ENCODE measurements at regions of chr9 and their contacts with region 1.

Region 1: GRCh38 chr9:15211160-15211814 is 95.7 kb downstream of the TTC39B start:
- DNase-seq: peak; percentile 14 to 34
- ATAC-seq: peak; percentile 62 to 78
- H3K4me3 ChIP-seq: no peak overlapping the region
- H3K27ac ChIP-seq: no peak overlapping the region
- H3K4me1 ChIP-seq: no peaks in the 10 kb centered on the region
- H3K27me3 ChIP-seq: no peaks in the 10 kb centered on the region
- CTCF ChIP-seq: peak; percentile 62 to 90 (median 69)
- POLR2A ChIP-seq: no peak

Region 2: DNA sequence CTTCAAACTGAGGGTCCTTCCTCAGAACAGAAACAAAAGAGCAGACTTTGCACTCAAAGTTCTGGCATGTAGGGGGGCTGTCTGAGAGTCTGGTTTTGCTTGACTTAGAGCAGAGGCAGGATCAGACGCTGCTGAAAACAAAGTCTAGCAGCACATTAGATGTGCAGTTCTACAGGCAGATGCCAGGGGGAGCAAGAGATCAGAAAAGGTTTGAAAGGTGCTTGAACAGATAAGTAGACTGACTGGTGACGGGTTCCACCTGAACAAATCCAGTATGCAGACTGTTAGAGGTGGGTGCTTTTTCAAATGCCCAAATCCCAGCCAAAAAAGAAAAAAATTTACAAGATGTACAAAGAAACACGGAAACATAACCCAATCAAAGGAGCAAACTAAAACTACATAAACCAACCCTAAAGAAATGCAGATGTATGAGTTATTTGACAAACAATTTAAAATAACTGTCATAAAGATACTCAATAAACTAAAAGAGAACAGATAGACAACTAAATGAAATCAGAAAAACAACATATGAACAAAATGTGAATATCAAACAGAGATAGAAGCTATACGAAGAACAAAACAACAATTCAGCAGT is 106.4 kb before region 1 on chr9:
- in situ Hi-C with region 1: loop called in 1 of 4 experiments (anchors 25 kb)
- intact Hi-C with region 1: no loop called
- DNase-seq: peak in 1 of 2 donors; percentile 8
- ATAC-seq: peak; percentile 73 to 84
- H3K4me3 ChIP-seq: no peak overlapping the region
- H3K27ac ChIP-seq: no peak overlapping the region
- H3K4me1 ChIP-seq: no peaks in the 10 kb centered on the region
- H3K27me3 ChIP-seq: no peaks in the 10 kb centered on the region
- CTCF ChIP-seq: peak; percentile 57 to 77 (median 75)
- POLR2A ChIP-seq: no peak

Region 3: GRCh38 chr9:15370466-15371447 is 159.5 kb after region 1 on chr9:
- in situ Hi-C with region 1: no loop called
- intact Hi-C with region 1: no loop called
- DNase-seq: no peak
- ATAC-seq: no peak
- H3K4me3 ChIP-seq: no peak overlapping the region
- H3K27ac ChIP-seq: no peak overlapping the region
- H3K4me1 ChIP-seq: no peaks in the 10 kb centered on the region
- H3K27me3 ChIP-seq: no peaks in the 10 kb centered on the region
- CTCF ChIP-seq: no peak
- POLR2A ChIP-seq: no peak

Region 4: DNA sequence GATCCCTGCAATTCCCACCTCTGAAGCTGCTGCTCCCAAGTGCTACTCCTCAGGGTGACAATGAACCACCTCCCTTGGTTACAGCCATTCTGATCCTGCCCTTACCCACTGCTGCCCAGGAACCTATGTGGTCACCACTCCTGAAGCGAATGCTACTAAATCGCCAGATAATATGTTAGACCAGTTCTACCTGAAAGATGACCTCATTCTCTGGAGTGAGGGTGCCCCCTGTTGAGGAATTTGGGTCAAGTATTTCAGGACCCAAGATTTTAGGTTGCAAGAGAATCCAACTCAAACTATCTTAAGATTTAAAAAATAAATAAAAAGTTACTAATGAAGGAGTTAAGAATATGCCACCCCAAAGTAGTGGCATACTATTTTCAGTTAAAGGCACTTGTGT is 205.6 kb after region 1 on chr9:
- in situ Hi-C with region 1: loop called in 3 of 4 experiments (anchors 10 to 25 kb)
- intact Hi-C with region 1: loop called (anchors 10 kb)
- DNase-seq: no peak
- ATAC-seq: no peak
- H3K4me3 ChIP-seq: no peak overlapping the region
- H3K27ac ChIP-seq: no peak overlapping the region
- H3K4me1 ChIP-seq: no peaks in the 10 kb centered on the region
- H3K27me3 ChIP-seq: no peaks in the 10 kb centered on the region
- CTCF ChIP-seq: no peak
- POLR2A ChIP-seq: no peak

Region 5: GRCh38 chr9:15422372-15423230 is 211.3 kb after region 1 on chr9 and contains the start of gene SNAPC3:
- in situ Hi-C with region 1: loop called in 3 of 4 experiments (anchors 10 to 25 kb)
- intact Hi-C with region 1: loop called (anchors 10 kb)
- DNase-seq: peak; percentile 83 to 88
- ATAC-seq: peak; percentile 97 to 98
- H3K4me3 ChIP-seq: peak within 1 kb of the TSS; percentile 86 to 100 (median 89)
- H3K27ac ChIP-seq: peak within 1 kb of the TSS; percentile 86 to 91 (median 90)
- H3K4me1 ChIP-seq: peaks cover 6 to 16% of the 10 kb centered on the region in 2 donors
- H3K27me3 ChIP-seq: no peaks in the 10 kb centered on the region
- CTCF ChIP-seq: peak in 2 of 5 experiments; percentile 16 to 18
- POLR2A ChIP-seq: peak; percentile 50 to 51
- total RNA-seq, gene SNAPC3: 18.3 to 31.9 (median 20.3) TPM

Region 6: GRCh38 chr9:15606643-15607472 is 395.6 kb after region 1 on chr9:
- in situ Hi-C with region 1: loop called in 3 of 4 experiments (anchors 10 to 25 kb)
- intact Hi-C with region 1: loop called (anchors 1 kb)
- DNase-seq: no peak
- ATAC-seq: peak in 1 of 2 donors; percentile 42
- H3K4me3 ChIP-seq: no peak overlapping the region
- H3K27ac ChIP-seq: no peak overlapping the region
- H3K4me1 ChIP-seq: peaks cover 0 to 5% of the 10 kb centered on the region in 2 donors
- H3K27me3 ChIP-seq: no peaks in the 10 kb centered on the region
- CTCF ChIP-seq: peak; percentile 60 to 83 (median 62)
- POLR2A ChIP-seq: no peak

Region 7: GRCh38 chr9:15612962-15613361 is 401.7 kb after region 1 on chr9:
- in situ Hi-C with region 1: loop called in 3 of 4 experiments (anchors 10 to 25 kb)
- intact Hi-C with region 1: no loop called
- DNase-seq: no peak
- ATAC-seq: no peak
- H3K4me3 ChIP-seq: no peak overlapping the region
- H3K27ac ChIP-seq: no peak overlapping the region
- H3K4me1 ChIP-seq: no peaks in the 10 kb centered on the region
- H3K27me3 ChIP-seq: no peaks in the 10 kb centered on the region
- CTCF ChIP-seq: no peak
- POLR2A ChIP-seq: no peak

Region 8: GRCh38 chr9:15942831-15943424 is 731.6 kb after region 1 on chr9:
- in situ Hi-C with region 1: no loop called
- intact Hi-C with region 1: no loop called
- DNase-seq: no peak
- ATAC-seq: no peak
- H3K4me3 ChIP-seq: no peak overlapping the region
- H3K27ac ChIP-seq: no peak overlapping the region
- H3K4me1 ChIP-seq: no peaks in the 10 kb centered on the region
- H3K27me3 ChIP-seq: no peaks in the 10 kb centered on the region
- CTCF ChIP-seq: no peak
- POLR2A ChIP-seq: no peak

Measured in gastrocnemius medialis (tissue), 4 donors.